ENCODE measurements at regions of chr16 and their contacts with region 1.

Region 1: GRCh38 chr16:1363501-1364041 is 11.8 kb downstream of the GNPTG start:
- DNase-seq: peak; percentile 79
- ATAC-seq: peak; percentile 94
- H3K4me3 ChIP-seq: no peak overlapping the region
- H3K4me3 Mint-ChIP-seq: no peak overlapping the region
- H3K27ac ChIP-seq: no peak overlapping the region
- H3K27ac Mint-ChIP-seq: peak overlapping the region; percentile 50
- H3K4me1 ChIP-seq: no peaks in the 10 kb centered on the region
- H3K4me1 Mint-ChIP-seq: peaks cover 2% of the 10 kb centered on the region
- H3K27me3 ChIP-seq: no peaks in the 10 kb centered on the region
- H3K27me3 Mint-ChIP-seq: no peaks in the 10 kb centered on the region
- CTCF ChIP-seq: peak; percentile 93

Region 2: GRCh38 chr16:1300664-1301476 is 62.7 kb before region 1 on chr16:
- CTCF ChIA-PET with region 1: interaction called, 15 read pairs
- POLR2A ChIA-PET with region 1: no interaction called
- intact Hi-C with region 1: no loop called
- DNase-seq: peak; percentile 81
- ATAC-seq: peak; percentile 72
- H3K4me3 ChIP-seq: peak overlapping the region in 4 of 5 experiments; percentile 13 to 43 (median 23)
- H3K4me3 Mint-ChIP-seq: peak overlapping the region; percentile 32
- H3K27ac ChIP-seq: no peak overlapping the region
- H3K27ac Mint-ChIP-seq: peak overlapping the region; percentile 15
- H3K4me1 ChIP-seq: peaks cover 42 to 62% of the 10 kb centered on the region in 2 donors
- H3K4me1 Mint-ChIP-seq: peaks cover 42% of the 10 kb centered on the region
- H3K27me3 ChIP-seq: peaks cover 0 to 3% (median 0%) of the 10 kb centered on the region in 4 experiments
- H3K27me3 Mint-ChIP-seq: peaks cover 4% of the 10 kb centered on the region
- CTCF ChIP-seq: peak; percentile 94

Region 3: DNA sequence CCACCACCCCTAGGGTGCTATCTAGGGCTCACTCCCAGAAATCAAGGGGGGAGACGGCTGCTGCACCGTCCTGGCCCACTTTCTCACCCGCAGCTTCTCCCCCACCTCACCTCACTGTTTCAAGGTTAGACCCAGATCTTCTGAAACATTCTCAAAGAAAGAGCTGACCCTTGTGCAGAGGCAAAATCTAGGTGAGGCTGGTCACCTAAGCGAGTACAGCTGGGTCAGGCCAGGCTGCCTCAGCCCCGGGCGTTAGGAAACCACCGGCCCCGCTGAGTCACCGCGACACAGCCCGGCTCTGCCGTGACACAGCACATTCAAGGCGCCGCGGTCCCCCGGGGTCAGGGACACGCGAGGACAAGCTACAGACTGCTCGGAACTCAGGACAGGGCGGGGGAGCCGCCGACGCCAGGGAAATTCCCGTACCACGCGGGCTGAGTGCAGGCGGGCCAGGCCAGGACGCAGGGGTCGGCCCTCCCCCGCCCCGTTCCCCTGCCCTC is 15.3 kb after region 1 on chr16:
- CTCF ChIA-PET with region 1: interaction called, 17 read pairs
- POLR2A ChIA-PET with region 1: no interaction called
- intact Hi-C with region 1: no loop called
- DNase-seq: peak; percentile 75
- ATAC-seq: peak; percentile 55
- H3K4me3 ChIP-seq: peak overlapping the region in 3 of 5 experiments; percentile 39 to 52 (median 51)
- H3K4me3 Mint-ChIP-seq: peak overlapping the region; percentile 77
- H3K27ac ChIP-seq: peak overlapping the region in 1 of 2 donors; percentile 33
- H3K27ac Mint-ChIP-seq: peak overlapping the region; percentile 16
- H3K4me1 ChIP-seq: peaks cover 10 to 14% of the 10 kb centered on the region in 2 donors
- H3K4me1 Mint-ChIP-seq: peaks cover 15% of the 10 kb centered on the region
- H3K27me3 ChIP-seq: no peaks in the 10 kb centered on the region
- H3K27me3 Mint-ChIP-seq: no peaks in the 10 kb centered on the region
- CTCF ChIP-seq: no peak

Region 4: DNA sequence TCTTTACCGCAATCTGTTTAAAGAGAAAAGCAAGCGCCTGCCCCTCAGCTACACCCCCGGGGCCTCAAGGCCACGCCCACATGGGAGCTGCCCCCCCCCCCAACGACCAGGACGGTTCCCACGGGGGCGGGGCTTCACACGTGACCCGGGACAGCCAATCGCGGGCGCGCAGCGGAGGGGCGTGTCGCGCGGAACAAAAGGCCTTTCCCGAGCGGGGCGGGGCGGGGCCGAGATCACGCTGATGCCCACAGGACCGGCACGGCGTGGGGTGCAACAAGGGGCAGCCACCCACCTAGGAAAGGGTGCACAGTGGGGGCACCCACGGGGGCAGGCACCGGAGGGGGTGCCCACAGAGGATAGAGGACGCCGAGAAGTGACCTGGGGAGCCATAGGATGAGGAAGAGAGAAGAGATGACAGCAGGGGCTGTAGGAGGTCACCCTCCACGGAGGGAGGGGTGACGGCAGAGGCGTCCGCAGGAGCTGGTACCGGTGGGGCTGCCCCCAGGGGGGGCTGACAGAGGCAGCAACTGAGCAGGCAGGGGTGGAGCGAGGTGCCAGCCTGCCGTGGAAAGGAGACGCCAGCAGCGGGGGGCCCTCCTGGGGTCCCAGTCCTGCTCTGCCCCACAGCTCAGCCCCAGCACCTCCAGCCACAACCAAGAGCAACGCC is 44.7 kb after region 1 on chr16:
- CTCF ChIA-PET with region 1: interaction called, 16 read pairs
- POLR2A ChIA-PET with region 1: no interaction called
- intact Hi-C with region 1: loop called (anchors 10 kb)
- DNase-seq: peak; percentile 97
- ATAC-seq: peak; percentile 94
- H3K4me3 ChIP-seq: peak overlapping the region in 4 of 5 experiments; percentile 30 to 57 (median 52)
- H3K4me3 Mint-ChIP-seq: peak overlapping the region; percentile 83
- H3K27ac ChIP-seq: peak overlapping the region; percentile 56 to 60
- H3K27ac Mint-ChIP-seq: peak overlapping the region; percentile 84
- H3K4me1 ChIP-seq: peaks cover 14 to 21% of the 10 kb centered on the region in 2 donors
- H3K4me1 Mint-ChIP-seq: peaks cover 25% of the 10 kb centered on the region
- H3K27me3 ChIP-seq: no peaks in the 10 kb centered on the region
- H3K27me3 Mint-ChIP-seq: no peaks in the 10 kb centered on the region
- CTCF ChIP-seq: no peak

Region 5: GRCh38 chr16:1543085-1543896 is 179.7 kb after region 1 on chr16:
- CTCF ChIA-PET with region 1: interaction called, 20 read pairs
- POLR2A ChIA-PET with region 1: no interaction called
- intact Hi-C with region 1: no loop called
- DNase-seq: peak; percentile 73
- ATAC-seq: peak; percentile 76
- H3K4me3 ChIP-seq: peak overlapping the region in 3 of 5 experiments; percentile 18 to 37 (median 37)
- H3K4me3 Mint-ChIP-seq: peak overlapping the region; percentile 76
- H3K27ac ChIP-seq: peak overlapping the region in 1 of 2 donors; percentile 38
- H3K27ac Mint-ChIP-seq: peak overlapping the region; percentile 51
- H3K4me1 ChIP-seq: peaks cover 25 to 36% of the 10 kb centered on the region in 2 donors
- H3K4me1 Mint-ChIP-seq: peaks cover 23% of the 10 kb centered on the region
- H3K27me3 ChIP-seq: no peaks in the 10 kb centered on the region
- H3K27me3 Mint-ChIP-seq: no peaks in the 10 kb centered on the region
- CTCF ChIP-seq: no peak

Measured in B cell (primary cell).